ENCODE measurements at regions of chr2 and their contacts with region 1.

Region 1: GRCh38 chr2:96509114-96509846 is 4.1 kb upstream of the NEURL3 start:
- DNase-seq: peak; percentile 72 to 80 (median 74)
- H3K4me3 ChIP-seq: peak overlapping the region in 1 of 7 experiments; percentile 15
- H3K27ac ChIP-seq: no peak overlapping the region
- H3K4me1 ChIP-seq: peaks cover 0 to 19% (median 9%) of the 10 kb centered on the region in 4 experiments
- H3K27me3 ChIP-seq: peaks cover 0 to 2% (median 0%) of the 10 kb centered on the region in 5 experiments

Region 2: DNA sequence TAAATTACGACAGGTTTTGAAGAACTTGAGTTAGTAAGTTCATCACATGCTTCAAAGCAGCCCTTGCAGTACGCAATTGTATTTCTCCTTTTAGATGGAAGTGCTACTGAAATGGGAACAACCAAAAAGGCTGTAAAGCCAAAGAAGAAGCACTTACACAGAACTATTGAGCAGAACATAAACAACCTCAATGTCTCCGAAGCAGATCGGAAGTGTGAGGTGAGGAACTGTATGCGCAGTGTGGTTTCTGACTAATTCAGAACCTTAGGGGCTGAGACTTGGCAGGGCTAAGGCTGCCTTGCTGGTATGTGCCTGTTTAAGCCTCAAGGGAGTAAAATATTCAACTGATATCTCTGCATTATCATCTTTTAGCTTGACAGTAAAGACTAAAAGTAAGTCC is 165.3 kb before region 1 on chr2:
- CTCF ChIA-PET with region 1: no interaction called
- POLR2A ChIA-PET with region 1: no interaction called
- DNase-seq: peak in 2 of 3 donors; percentile 41 to 52
- H3K4me3 ChIP-seq: no peak overlapping the region
- H3K27ac ChIP-seq: no peak overlapping the region
- H3K4me1 ChIP-seq: no peaks in the 10 kb centered on the region
- H3K27me3 ChIP-seq: no peaks in the 10 kb centered on the region

Region 3: DNA sequence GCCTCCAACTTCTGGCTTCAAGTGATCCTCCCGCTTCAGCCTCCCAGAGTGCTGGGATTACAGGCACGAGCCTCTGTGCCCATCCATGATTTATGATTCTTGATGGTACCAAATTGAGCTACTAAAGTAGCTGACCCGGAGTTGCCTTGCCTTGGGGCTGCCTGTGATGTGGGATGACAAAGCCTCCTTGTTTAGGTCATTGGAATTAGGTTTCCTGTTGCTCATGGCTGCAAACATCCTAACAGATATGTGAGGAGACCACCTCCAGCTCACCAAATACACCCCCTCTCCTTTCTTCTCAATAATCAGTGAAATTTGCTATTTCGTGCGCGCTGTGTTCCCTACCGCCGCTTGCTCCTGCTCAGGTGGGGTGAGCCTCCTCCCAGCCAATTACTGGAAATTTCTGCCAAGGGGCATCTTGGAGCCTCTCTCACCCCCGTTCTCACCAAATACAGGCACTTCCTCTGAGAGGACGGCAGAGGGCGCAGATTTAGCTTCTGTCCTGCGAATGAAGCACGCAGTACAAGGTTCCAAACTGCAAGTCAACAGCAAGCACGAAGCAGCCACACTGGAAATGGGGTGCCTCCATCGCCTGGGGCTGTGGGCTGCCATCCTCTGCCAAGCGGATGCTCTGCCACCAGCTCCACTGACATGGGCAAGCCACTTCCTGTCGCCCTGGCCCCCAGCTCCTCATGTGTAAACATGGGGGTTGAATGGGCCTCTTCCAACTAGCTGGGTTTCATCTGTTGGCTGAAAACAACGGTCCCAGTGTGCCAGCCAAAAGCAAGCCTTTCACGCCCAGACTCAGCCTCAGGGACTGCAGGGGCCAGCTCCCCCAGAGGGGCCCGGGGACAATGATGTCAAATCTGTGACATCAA is 102.0 kb before region 1 on chr2:
- CTCF ChIA-PET with region 1: interaction called, 114 read pairs
- POLR2A ChIA-PET with region 1: no interaction called
- DNase-seq: peak; percentile 85 to 92 (median 91)
- H3K4me3 ChIP-seq: peak overlapping the region in 2 of 7 experiments; percentile 22 to 45
- H3K27ac ChIP-seq: no peak overlapping the region
- H3K4me1 ChIP-seq: peaks cover 0 to 23% (median 14%) of the 10 kb centered on the region in 4 experiments
- H3K27me3 ChIP-seq: peaks cover 0 to 2% (median 0%) of the 10 kb centered on the region in 5 experiments

Region 4: DNA sequence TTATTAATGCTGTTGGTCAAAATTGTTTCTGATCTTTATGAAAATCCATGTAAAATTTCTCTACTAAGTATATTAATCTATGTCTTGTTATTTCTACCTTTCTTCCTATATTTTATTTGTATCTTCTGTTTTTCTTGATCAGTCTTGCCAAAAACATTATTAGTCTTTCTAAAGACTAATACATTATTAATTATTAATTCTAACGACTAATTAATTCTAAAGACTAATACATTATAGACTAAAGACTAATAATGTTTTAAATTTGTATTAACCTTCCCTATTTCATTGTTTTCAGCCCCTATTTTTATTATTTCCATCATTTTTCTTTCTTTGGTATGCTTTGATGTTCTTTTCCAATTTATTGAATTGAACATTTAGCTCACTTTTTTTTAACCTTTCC is 31.8 kb before region 1 on chr2:
- CTCF ChIA-PET with region 1: interaction called, 20 read pairs
- POLR2A ChIA-PET with region 1: no interaction called
- DNase-seq: no peak
- H3K4me3 ChIP-seq: no peak overlapping the region
- H3K27ac ChIP-seq: no peak overlapping the region
- H3K4me1 ChIP-seq: no peaks in the 10 kb centered on the region
- H3K27me3 ChIP-seq: no peaks in the 10 kb centered on the region

Region 5: DNA sequence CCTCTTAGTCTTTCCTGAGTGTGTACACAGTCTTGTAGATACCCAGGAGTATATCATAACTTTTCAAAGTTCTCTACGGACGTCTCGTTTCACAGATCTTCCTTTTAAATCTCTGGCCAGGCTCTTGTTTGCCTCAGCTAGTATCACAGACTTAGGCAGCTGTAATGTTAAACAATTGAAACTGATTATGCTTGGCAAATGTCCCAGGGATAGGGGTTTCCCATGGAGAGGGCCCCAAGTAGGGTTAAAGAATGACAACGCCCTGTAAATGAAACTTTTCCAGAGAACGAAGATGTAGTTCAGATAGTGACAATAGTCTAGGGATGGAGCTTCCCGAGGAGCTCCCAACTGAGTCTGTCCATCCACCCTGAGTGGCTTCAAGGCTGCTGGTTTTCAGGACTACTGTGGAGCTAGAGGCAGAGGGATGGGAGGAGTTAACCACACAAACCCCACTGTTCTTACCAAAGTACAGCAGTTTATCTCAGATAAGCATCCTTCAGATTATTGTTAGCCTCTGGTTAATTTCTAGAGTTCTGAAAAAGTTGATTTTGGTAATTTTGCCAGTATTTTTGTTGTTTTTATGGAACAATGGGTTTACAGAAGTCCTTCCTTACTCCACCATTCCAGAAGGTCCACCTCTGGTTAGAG is 13.2 kb before region 1 on chr2:
- CTCF ChIA-PET with region 1: interaction called, 12 read pairs
- POLR2A ChIA-PET with region 1: no interaction called
- DNase-seq: peak in 2 of 3 donors; percentile 17 to 32
- H3K4me3 ChIP-seq: no peak overlapping the region
- H3K27ac ChIP-seq: no peak overlapping the region
- H3K4me1 ChIP-seq: peaks cover 0 to 19% (median 9%) of the 10 kb centered on the region in 4 experiments
- H3K27me3 ChIP-seq: no peaks in the 10 kb centered on the region

Region 6: GRCh38 chr2:96554293-96555145 is 45.2 kb after region 1 on chr2:
- CTCF ChIA-PET with region 1: interaction called, 12 read pairs
- POLR2A ChIA-PET with region 1: interaction called, 3 read pairs
- DNase-seq: peak; percentile 72 to 81 (median 79)
- H3K4me3 ChIP-seq: peak overlapping the region in 4 of 7 experiments; percentile 14 to 70 (median 36)
- H3K27ac ChIP-seq: no peak overlapping the region
- H3K4me1 ChIP-seq: peaks cover 0 to 11% (median 7%) of the 10 kb centered on the region in 4 experiments
- H3K27me3 ChIP-seq: no peaks in the 10 kb centered on the region

Region 7: GRCh38 chr2:96608469-96609455 is 99.5 kb after region 1 on chr2:
- CTCF ChIA-PET with region 1: no interaction called
- POLR2A ChIA-PET with region 1: no interaction called
- DNase-seq: no peak
- H3K4me3 ChIP-seq: no peak overlapping the region
- H3K27ac ChIP-seq: no peak overlapping the region
- H3K4me1 ChIP-seq: no peaks in the 10 kb centered on the region
- H3K27me3 ChIP-seq: no peaks in the 10 kb centered on the region

Measured in common myeloid progenitor, CD34-positive (primary cell).